A673 (cell line): ENCODE measurements at regions of chr10 and their contacts with region 1.

Region 1: GRCh38 chr10:72364239-72364777 is 9.6 kb upstream of the DNAJB12 start:
- DNase-seq: peak; percentile 97
- H3K4me3 ChIP-seq: no peak overlapping the region
- H3K27ac ChIP-seq: peak overlapping the region; percentile 15
- H3K4me1 ChIP-seq: no peaks in the 10 kb centered on the region
- H3K27me3 ChIP-seq: no peaks in the 10 kb centered on the region
- CTCF ChIP-seq: peak; percentile 95

Region 2: GRCh38 chr10:72612203-72612826 is 248.0 kb after region 1 on chr10:
- CTCF ChIA-PET with region 1: no interaction called
- POLR2A ChIA-PET with region 1: no interaction called
- intact Hi-C with region 1: loop called (anchors 10 kb)
- DNase-seq: peak; percentile 98
- H3K4me3 ChIP-seq: peak overlapping the region; percentile 16
- H3K27ac ChIP-seq: no peak overlapping the region
- H3K4me1 ChIP-seq: peaks cover 14% of the 10 kb centered on the region
- H3K27me3 ChIP-seq: no peaks in the 10 kb centered on the region
- CTCF ChIP-seq: no peak

Region 3: GRCh38 chr10:72834183-72834825 is 470.0 kb after region 1 on chr10:
- CTCF ChIA-PET with region 1: interaction called, 26 read pairs
- POLR2A ChIA-PET with region 1: no interaction called
- intact Hi-C with region 1: loop called (anchors 1 kb)
- DNase-seq: peak; percentile 76
- H3K4me3 ChIP-seq: no peak overlapping the region
- H3K27ac ChIP-seq: no peak overlapping the region
- H3K4me1 ChIP-seq: no peaks in the 10 kb centered on the region
- H3K27me3 ChIP-seq: no peaks in the 10 kb centered on the region
- CTCF ChIP-seq: peak; percentile 75

Region 4: GRCh38 chr10:73060738-73061635 is 696.7 kb after region 1 on chr10:
- CTCF ChIA-PET with region 1: no interaction called
- POLR2A ChIA-PET with region 1: no interaction called
- intact Hi-C with region 1: loop called (anchors 2 kb)
- DNase-seq: peak; percentile 52
- H3K4me3 ChIP-seq: no peak overlapping the region
- H3K27ac ChIP-seq: no peak overlapping the region
- H3K4me1 ChIP-seq: no peaks in the 10 kb centered on the region
- H3K27me3 ChIP-seq: no peaks in the 10 kb centered on the region
- CTCF ChIP-seq: peak; percentile 65